PC-3 (cell line): ENCODE measurements at regions of chr18 and their contacts with region 1.

Region 1: GRCh38 chr18:59851784-59852399 is 47.9 kb upstream of the PMAIP1 start:
- DNase-seq: no peak
- ATAC-seq: peak; percentile 36
- H3K4me3 ChIP-seq: no peak overlapping the region
- H3K27ac ChIP-seq: no peak overlapping the region
- H3K4me1 ChIP-seq: peaks cover 16% of the 10 kb centered on the region
- H3K27me3 ChIP-seq: no peaks in the 10 kb centered on the region
- CTCF ChIP-seq: no peak

Region 2: GRCh38 chr18:60259052-60259681 is 407.3 kb after region 1 on chr18:
- CTCF ChIA-PET with region 1: no interaction called
- POLR2A ChIA-PET with region 1: interaction called, 21 read pairs
- intact Hi-C with region 1: no loop called
- DNase-seq: peak; percentile 59
- ATAC-seq: peak; percentile 93
- H3K4me3 ChIP-seq: peak overlapping the region; percentile 17; the same call in 1 of the 2 replicates
- H3K27ac ChIP-seq: no peak overlapping the region
- H3K4me1 ChIP-seq: peaks cover 11% of the 10 kb centered on the region
- H3K27me3 ChIP-seq: no peaks in the 10 kb centered on the region
- CTCF ChIP-seq: no peak

Region 3: GRCh38 chr18:60358516-60358915 is 506.6 kb after region 1 on chr18:
- CTCF ChIA-PET with region 1: no interaction called
- POLR2A ChIA-PET with region 1: no interaction called
- intact Hi-C with region 1: no loop called
- DNase-seq: peak; percentile 86
- ATAC-seq: peak; percentile 97
- H3K4me3 ChIP-seq: no peak overlapping the region
- H3K27ac ChIP-seq: peak overlapping the region; percentile 49
- H3K4me1 ChIP-seq: peaks cover 31% of the 10 kb centered on the region
- H3K27me3 ChIP-seq: no peaks in the 10 kb centered on the region
- CTCF ChIP-seq: no peak